B cell (primary cell): ENCODE measurements at regions of chr19 and their contacts with region 1.

Region 1: GRCh38 chr19:52942386-52943133 is 19.3 kb upstream of the ZNF888 start:
- DNase-seq: peak; percentile 96
- ATAC-seq: peak; percentile 100
- H3K4me3 ChIP-seq: peak overlapping the region; percentile 64 to 97 (median 88)
- H3K4me3 Mint-ChIP-seq: peak overlapping the region; percentile 92
- H3K27ac ChIP-seq: peak overlapping the region; percentile 72 to 90
- H3K27ac Mint-ChIP-seq: peak overlapping the region; percentile 86
- H3K4me1 ChIP-seq: peaks cover 6 to 20% of the 10 kb centered on the region in 2 donors
- H3K4me1 Mint-ChIP-seq: peaks cover 30% of the 10 kb centered on the region
- H3K27me3 ChIP-seq: no peaks in the 10 kb centered on the region
- H3K27me3 Mint-ChIP-seq: no peaks in the 10 kb centered on the region
- CTCF ChIP-seq: no peak

Region 2: GRCh38 chr19:52048555-52049501 is 893.7 kb before region 1 on chr19 and contains the start of gene ZNF432:
- CTCF ChIA-PET with region 1: no interaction called
- POLR2A ChIA-PET with region 1: no interaction called
- intact Hi-C with region 1: loop called (anchors 1 kb)
- DNase-seq: peak; percentile 93
- ATAC-seq: peak; percentile 87
- H3K4me3 ChIP-seq: peak within 1 kb of the TSS; percentile 70 to 99 (median 93)
- H3K4me3 Mint-ChIP-seq: peak within 1 kb of the TSS; percentile 98
- H3K27ac ChIP-seq: peak within 1 kb of the TSS; percentile 92 to 99
- H3K27ac Mint-ChIP-seq: peak within 1 kb of the TSS; percentile 100
- H3K4me1 ChIP-seq: peaks cover 9 to 10% of the 10 kb centered on the region in 2 donors
- H3K4me1 Mint-ChIP-seq: peaks cover 22% of the 10 kb centered on the region
- H3K27me3 ChIP-seq: no peaks in the 10 kb centered on the region
- H3K27me3 Mint-ChIP-seq: no peaks in the 10 kb centered on the region
- CTCF ChIP-seq: no peak
- total RNA-seq, gene ZNF432: 25.0 and 28.7 TPM in 2 replicates

Region 3: DNA sequence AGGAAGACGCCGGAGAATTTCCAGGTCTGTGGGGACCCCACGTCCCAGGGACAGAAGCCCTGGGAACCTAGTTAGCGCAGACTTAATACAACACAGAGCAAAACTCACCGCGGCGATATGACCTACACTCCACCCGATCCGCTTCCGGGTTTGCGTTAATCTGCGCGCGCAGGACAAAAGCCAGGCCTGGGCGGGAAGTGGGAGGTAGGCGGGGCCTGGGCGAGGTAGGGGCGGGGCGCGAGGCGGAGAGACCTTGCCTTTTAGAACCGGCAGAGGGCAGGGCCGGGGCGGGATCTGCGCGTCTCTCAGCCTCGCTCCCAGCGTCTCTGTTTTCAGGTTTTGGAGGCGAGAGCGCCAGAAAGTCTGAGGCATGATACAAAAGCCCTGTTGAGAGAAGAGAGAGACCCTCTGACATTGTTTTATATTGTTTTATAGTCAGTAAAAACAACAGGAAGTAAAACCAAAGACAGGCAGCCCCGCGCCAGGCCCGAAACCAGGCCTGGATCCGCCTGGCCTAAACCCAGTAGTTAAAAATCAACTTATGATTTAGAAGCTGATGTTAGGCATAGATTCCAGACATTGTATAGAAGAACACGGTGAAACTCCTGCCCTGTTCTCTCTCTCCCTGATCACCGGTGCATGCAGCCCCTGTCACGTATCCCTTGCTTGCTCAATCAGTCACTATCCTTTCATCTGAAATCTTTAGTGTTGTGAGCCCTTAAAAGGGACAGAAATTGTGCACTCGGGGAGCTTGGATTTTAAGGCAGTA is 207.5 kb before region 1 on chr19 and contains the start of gene ZNF611:
- CTCF ChIA-PET with region 1: no interaction called
- POLR2A ChIA-PET with region 1: no interaction called
- intact Hi-C with region 1: loop called (anchors 1 kb)
- DNase-seq: peak; percentile 98
- ATAC-seq: peak; percentile 98
- H3K4me3 ChIP-seq: peak within 1 kb of the TSS; percentile 67 to 96 (median 90)
- H3K4me3 Mint-ChIP-seq: peak within 1 kb of the TSS; percentile 93
- H3K27ac ChIP-seq: peak within 1 kb of the TSS; percentile 74 to 91
- H3K27ac Mint-ChIP-seq: peak within 1 kb of the TSS; percentile 92
- H3K4me1 ChIP-seq: peaks cover 10 to 19% of the 10 kb centered on the region in 2 donors
- H3K4me1 Mint-ChIP-seq: peaks cover 23% of the 10 kb centered on the region
- H3K27me3 ChIP-seq: no peaks in the 10 kb centered on the region
- H3K27me3 Mint-ChIP-seq: no peaks in the 10 kb centered on the region
- CTCF ChIP-seq: peak; percentile 79
- total RNA-seq, gene ZNF611: 51.5 and 57.9 TPM in 2 replicates

Region 4: DNA sequence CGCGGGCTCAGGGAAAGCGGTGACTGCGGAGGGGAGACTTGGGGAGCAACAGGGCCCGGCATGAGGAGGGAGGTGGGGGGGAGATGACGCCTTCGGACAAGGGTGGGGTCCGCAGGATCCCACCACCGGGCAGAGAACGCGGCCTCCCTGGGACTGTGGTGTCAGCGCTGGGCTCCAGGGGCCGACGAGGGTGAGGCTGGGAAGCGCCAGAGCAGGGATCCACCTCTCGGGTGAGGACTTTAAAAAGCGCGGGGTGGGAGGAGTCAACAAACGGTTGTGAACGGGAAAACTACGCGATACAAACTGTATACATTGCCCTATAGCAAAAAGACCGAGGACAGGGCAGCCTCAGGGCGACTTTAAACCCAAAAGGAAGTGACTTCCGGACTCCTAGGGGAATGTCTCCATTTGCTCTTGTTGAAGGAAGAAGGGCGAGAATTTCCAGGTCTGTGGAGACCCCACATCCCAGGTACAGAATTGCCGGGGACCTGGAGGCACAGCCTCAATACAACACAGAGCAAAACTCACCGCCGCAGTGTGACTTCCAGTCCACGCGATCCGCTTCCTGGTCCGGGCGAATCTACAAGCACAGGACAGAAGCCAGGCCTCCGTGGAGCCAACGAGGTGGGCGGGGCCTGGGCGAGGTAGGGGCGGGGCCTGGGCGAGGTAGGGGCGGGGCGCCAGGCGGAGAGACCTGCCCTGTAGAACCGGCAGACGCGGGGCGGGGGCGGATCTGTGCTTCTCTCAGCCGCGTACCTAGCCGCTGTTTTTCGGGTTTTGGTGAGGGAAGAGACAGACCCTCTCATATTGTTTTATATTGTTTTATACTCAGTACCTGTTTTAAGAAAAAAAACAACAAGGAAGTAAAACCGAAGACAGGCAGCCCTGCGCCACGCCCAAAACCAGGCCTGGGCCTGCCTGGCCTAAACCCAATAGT is 19.5 kb before region 1 on chr19 and contains the start of gene ZNF888:
- CTCF ChIA-PET with region 1: no interaction called
- POLR2A ChIA-PET with region 1: no interaction called
- intact Hi-C with region 1: loop called (anchors 2 kb)
- DNase-seq: peak; percentile 89
- ATAC-seq: peak; percentile 100
- H3K4me3 ChIP-seq: peak within 1 kb of the TSS; percentile 82 to 97 (median 88)
- H3K4me3 Mint-ChIP-seq: peak within 1 kb of the TSS; percentile 97
- H3K27ac ChIP-seq: peak within 1 kb of the TSS; percentile 66 to 84
- H3K27ac Mint-ChIP-seq: peak within 1 kb of the TSS; percentile 93
- H3K4me1 ChIP-seq: peaks cover 11 to 18% of the 10 kb centered on the region in 2 donors
- H3K4me1 Mint-ChIP-seq: peaks cover 28% of the 10 kb centered on the region
- H3K27me3 ChIP-seq: no peaks in the 10 kb centered on the region
- H3K27me3 Mint-ChIP-seq: no peaks in the 10 kb centered on the region
- CTCF ChIP-seq: no peak
- total RNA-seq, gene ZNF888: 15.3 and 15.6 TPM in 2 replicates

Region 5: GRCh38 chr19:52993323-52994178 is 51.0 kb after region 1 on chr19:
- CTCF ChIA-PET with region 1: no interaction called
- POLR2A ChIA-PET with region 1: no interaction called
- intact Hi-C with region 1: loop called (anchors 1 kb)
- DNase-seq: peak; percentile 73
- ATAC-seq: peak; percentile 99
- H3K4me3 ChIP-seq: peak overlapping the region in 4 of 5 experiments; percentile 33 to 64 (median 54)
- H3K4me3 Mint-ChIP-seq: peak overlapping the region; percentile 89
- H3K27ac ChIP-seq: no peak overlapping the region
- H3K27ac Mint-ChIP-seq: peak overlapping the region; percentile 61
- H3K4me1 ChIP-seq: peaks cover 8 to 14% of the 10 kb centered on the region in 2 donors
- H3K4me1 Mint-ChIP-seq: peaks cover 14% of the 10 kb centered on the region
- H3K27me3 ChIP-seq: peaks cover 0 to 10% (median 1%) of the 10 kb centered on the region in 4 experiments
- H3K27me3 Mint-ChIP-seq: peaks cover 12% of the 10 kb centered on the region
- CTCF ChIP-seq: peak; percentile 85

Region 6: GRCh38 chr19:53872762-53873161 is 930.2 kb after region 1 on chr19:
- CTCF ChIA-PET with region 1: no interaction called
- POLR2A ChIA-PET with region 1: interaction called, 12 read pairs
- intact Hi-C with region 1: no loop called
- DNase-seq: no peak
- ATAC-seq: no peak
- H3K4me3 ChIP-seq: no peak overlapping the region
- H3K4me3 Mint-ChIP-seq: no peak overlapping the region
- H3K27ac ChIP-seq: no peak overlapping the region
- H3K27ac Mint-ChIP-seq: peak overlapping the region; percentile 27
- H3K4me1 ChIP-seq: peaks cover 39 to 69% of the 10 kb centered on the region in 2 donors
- H3K4me1 Mint-ChIP-seq: peaks cover 54% of the 10 kb centered on the region
- H3K27me3 ChIP-seq: no peaks in the 10 kb centered on the region
- H3K27me3 Mint-ChIP-seq: peaks cover 4% of the 10 kb centered on the region
- CTCF ChIP-seq: no peak